Common myeloid progenitor, CD34-positive (primary cell): ENCODE measurements at regions of chr4 and their contacts with region 1.

Region 1: GRCh38 chr4:186037692-186038658 is 31.0 kb upstream of the TLR3 start:
- DNase-seq: peak; percentile 74 to 86 (median 77)
- H3K4me3 ChIP-seq: no peak overlapping the region
- H3K27ac ChIP-seq: no peak overlapping the region
- H3K4me1 ChIP-seq: no peaks in the 10 kb centered on the region
- H3K27me3 ChIP-seq: peaks cover 0 to 16% (median 12%) of the 10 kb centered on the region in 5 experiments

Region 2: DNA sequence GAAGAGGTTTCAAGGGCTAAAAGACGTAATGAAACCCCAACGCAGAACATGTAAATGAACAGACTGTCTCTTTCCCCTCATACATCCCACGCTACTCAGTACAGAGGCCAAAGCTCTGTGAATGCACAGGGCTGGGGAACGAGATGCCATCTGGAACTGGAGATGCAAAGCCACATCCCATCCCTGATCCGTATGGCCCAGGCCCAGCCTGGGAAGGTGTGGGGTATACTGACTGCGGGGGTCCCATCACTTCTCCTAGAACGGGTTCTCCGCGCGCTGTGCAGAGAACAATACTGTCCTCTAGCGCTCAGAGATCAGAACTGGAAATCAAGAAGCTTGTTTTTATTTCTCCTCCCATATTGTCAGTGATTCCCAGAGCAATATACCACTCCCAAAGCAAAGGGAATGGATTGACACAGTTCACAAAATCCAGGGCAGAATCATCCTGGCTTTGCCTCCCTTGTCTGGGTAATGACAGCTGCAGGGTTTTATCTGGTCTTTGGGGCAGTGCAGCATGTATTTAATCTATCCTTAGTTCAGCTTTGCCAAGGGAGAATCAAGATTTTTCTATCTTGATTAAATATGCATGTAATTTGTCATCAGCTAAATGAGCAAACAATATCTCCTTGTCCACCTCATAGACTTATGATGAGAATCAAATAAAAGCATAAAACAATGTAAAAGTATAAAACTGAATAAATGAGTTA is 16.4 kb before region 1 on chr4:
- CTCF ChIA-PET with region 1: interaction called, 18 read pairs
- POLR2A ChIA-PET with region 1: no interaction called
- DNase-seq: peak; percentile 23 to 34 (median 29)
- H3K4me3 ChIP-seq: no peak overlapping the region
- H3K27ac ChIP-seq: no peak overlapping the region
- H3K4me1 ChIP-seq: no peaks in the 10 kb centered on the region
- H3K27me3 ChIP-seq: peaks cover 0 to 5% (median 1%) of the 10 kb centered on the region in 5 experiments